GM10248 (cell line): ENCODE measurements at regions of chr19 and their contacts with region 1.

Region 1: DNA sequence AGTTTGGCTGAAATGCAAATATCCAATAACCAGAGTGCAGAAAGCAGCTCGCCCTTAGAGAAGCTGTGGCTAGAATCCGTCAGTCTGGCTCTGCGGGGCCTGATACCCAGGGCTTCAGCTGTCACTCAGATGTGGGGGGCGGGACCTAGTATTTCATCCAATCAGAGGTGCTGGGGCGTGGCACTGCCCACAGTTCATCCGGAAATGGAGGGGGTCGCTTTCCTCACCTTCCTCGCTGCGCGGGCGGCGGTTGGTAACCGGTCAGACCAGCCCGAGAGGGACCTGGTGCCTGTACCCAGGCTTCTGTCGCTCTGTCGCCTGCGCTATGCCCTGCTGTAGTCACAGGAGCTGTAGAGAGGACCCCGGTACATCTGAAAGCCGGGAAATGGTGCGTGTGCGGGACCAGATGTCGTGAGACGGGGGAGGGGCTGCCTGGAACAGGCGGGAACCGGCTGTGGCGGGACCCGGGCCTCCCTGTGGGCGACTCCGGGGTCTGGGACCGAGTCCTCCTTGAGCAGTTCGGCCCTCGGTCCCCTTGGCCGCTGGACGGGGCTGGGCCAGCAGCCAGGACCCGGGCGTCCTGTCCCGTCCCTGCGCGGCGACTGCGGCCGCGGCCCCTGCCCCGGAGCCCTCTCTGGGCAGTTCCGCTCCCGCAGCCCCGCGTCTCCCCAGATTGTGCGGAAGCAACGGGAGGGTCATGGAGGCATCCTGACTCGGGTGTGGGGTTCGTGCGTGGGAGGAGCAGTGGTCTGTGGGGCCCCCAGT is at the start of gene ZNF700:
- DNase-seq: peak; percentile 94
- CTCF ChIP-seq: no peak

Region 2: DNA sequence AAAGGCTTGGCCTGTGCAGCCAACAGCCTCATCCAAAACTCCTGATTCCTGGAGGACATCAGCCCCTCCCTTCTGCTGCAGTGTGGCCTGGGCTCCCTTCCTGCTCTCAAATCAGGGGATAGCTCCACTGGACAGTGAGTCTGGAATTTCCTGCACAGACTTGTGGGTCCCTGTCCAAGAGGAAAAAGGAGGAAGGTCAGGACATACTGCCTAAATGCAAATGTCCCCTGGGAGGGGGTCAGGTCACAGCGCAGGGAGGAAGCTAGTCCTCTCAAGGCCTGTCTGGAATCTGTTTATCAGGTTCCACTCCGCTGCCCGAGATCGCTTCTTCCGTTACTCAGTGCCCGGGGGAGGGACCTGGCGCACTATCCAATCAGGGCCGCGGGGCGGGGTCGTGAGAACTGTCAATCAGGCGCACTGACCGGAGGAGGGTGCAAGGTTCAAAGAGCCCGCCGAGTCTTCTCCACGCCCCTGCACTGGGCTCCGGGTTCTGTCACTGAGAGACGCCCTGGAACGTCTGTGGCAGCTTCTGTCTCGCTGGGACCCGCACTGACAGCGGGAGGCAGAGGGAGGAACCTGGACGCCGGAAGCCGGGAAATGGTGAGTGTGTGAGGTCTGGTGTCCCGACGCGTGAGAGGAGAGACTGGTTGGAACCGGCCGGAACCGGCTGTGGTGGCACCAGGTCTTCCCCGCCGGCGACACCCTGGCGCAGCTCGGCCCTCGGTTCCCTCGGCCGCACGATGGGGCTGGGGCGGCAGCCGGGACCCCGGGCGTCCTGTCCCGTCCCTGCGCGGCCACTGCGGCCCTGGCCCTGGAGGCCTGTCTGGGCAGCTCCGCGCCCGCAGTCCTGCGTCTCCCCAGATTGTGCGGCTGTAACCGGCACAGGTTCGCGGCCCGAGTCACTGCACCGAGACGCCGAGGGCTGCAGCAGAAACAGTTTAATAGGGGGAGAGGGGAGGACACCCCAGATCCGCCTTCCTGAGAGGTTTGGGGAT is 158.2 kb before region 1 on chr19 and contains the start of gene ZNF441:
- CTCF ChIA-PET with region 1: no interaction called
- POLR2A ChIA-PET with region 1: no interaction called
- DNase-seq: peak; percentile 94
- CTCF ChIP-seq: no peak

Region 3: DNA sequence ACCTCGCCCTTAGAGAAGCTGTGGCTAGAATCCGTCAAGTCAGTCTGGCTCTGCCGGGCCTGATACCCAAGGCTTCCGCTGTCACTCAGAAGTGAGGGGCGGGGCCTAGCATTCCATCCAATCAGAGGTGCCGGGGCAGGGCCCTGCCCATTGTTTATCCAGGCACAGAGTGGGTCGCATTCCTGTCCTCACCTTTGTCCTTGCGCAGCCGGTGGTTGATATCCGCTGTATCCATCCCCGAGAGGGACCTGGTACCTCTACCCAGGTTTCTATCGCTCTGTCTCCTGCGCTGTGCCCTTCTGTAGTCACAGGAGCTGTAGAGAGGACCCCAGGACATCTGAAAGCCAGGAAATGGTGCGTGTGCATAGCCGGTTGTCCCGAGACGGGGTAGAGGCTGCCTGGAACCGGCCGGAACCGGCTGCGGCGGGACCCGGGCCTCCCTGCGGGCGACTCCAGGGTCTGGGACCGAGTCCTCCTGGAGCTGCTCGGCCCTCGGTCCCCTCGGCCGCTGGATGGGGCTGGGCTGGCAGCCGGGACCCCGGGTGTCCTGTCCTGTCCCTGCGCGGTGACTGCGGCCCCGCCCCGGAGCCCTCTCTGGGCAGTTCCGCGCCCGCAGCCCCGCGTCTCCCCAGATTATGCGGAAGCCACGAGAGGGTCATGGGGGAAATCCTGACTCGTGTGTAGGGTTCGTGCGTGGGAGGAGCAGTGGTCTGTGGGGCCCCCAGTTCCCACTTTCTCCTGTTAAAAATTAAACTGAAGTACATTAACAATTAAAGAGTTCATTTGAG is 40.0 kb after region 1 on chr19 and contains the start of gene ZNF763:
- CTCF ChIA-PET with region 1: interaction called, 52 read pairs
- POLR2A ChIA-PET with region 1: interaction called, 3 read pairs
- DNase-seq: peak; percentile 92
- CTCF ChIP-seq: no peak

Region 4: GRCh38 chr19:12035220-12036153 is 110.4 kb after region 1 on chr19 and contains the start of gene ZNF433:
- CTCF ChIA-PET with region 1: interaction called, 10 read pairs
- POLR2A ChIA-PET with region 1: interaction called, 3 read pairs
- DNase-seq: peak; percentile 93
- CTCF ChIP-seq: no peak

Region 5: GRCh38 chr19:12092065-12092867 is 167.2 kb after region 1 on chr19:
- CTCF ChIA-PET with region 1: interaction called, 14 read pairs
- POLR2A ChIA-PET with region 1: no interaction called
- DNase-seq: peak; percentile 91
- CTCF ChIP-seq: no peak

Region 6: GRCh38 chr19:12162882-12163806 is 238.1 kb after region 1 on chr19 and contains the start of gene ZNF136:
- CTCF ChIA-PET with region 1: interaction called, 14 read pairs
- POLR2A ChIA-PET with region 1: no interaction called
- DNase-seq: peak; percentile 99
- CTCF ChIP-seq: no peak